T-cell (primary cell): ENCODE measurements at regions of chr13 and their contacts with region 1.

Region 1: DNA sequence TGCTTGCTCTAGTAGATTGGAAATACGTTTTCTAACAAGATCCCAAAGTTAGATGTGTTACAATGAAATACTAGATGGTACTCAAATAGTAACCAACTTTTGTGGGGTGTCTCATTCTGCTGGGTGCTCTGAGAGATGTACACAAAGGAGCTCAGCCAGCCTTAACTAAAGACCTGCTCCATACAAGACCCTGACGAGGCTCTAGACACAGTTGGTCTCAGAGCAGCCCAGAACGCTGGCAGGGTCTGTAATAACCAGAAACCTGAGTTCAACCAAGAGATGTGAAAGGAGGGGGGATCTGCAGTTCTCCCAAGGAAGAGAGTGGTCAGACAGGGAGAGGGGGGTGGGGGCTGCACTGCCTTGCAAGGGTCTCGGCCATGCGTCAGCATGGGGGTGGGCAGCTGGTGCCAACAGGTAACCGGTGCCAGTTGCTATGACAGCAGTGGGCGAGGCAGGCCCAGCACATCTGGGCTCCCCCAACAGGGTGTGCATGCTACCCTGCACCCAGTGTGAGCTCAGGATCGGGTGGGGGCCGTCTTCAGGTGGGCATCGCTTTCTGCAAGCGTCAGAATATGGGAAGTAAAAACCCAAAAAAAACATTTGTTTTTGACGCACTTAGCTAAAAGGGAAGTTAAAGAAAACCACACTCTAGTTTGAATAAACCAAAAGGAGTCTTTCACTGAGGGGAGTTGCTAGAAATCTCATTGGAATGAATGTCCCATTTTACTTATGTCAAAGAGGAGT is 68.0 kb upstream of the GPR183 start:
- DNase-seq: peak in 34 of 35 experiments; percentile 50 to 93 (median 84)
- ATAC-seq: peak; percentile 64 to 92 (median 70)
- H3K4me3 ChIP-seq: no peak overlapping the region
- H3K4me3 Mint-ChIP-seq: peak overlapping the region; percentile 49 to 72 (median 51)
- H3K27ac ChIP-seq: peak overlapping the region; percentile 88
- H3K27ac Mint-ChIP-seq: peak overlapping the region; percentile 98 to 100
- H3K4me1 ChIP-seq: peaks cover 68 to 69% of the 10 kb centered on the region in 2 experiments
- H3K4me1 Mint-ChIP-seq: peaks cover 87 to 94% (median 94%) of the 10 kb centered on the region in 3 donors
- H3K27me3 ChIP-seq: no peaks in the 10 kb centered on the region
- H3K27me3 Mint-ChIP-seq: no peaks in the 10 kb centered on the region

Region 2: DNA sequence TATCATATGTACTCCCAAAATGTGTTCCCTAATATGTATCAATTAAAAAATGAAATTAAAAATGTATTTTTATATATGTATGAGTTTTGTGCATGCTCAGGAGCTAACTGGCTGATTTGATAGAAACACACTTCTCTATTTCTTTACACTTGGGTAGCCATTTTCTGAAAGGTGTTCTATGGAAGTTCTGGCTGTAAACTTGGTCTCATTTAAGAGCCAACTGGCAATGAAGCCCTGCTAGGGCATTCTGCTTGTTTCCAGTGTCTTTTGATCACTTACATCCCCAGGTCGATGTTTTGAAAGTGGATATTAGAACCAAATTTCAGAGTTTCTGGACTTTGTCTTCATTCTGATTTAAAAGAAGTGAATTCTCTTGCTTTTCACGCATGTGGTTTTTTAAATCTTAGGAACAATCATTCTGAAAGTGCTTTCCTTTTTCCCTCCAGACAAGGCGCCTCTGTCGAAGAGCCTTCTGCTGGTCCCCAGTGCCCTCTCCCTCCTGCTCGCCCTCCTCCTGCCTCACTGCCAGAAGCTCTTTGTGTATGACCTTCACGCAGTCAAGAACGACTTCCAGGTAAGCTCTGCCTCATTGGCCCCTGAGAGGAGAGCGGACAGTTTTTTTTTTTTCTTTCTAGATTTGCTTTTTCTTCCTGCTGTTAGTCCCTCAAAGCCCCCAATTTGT is 137.0 kb before region 1 on chr13:
- CTCF ChIA-PET with region 1: no interaction called
- POLR2A ChIA-PET with region 1: interaction called in 1 of 2 experiments, 11 read pairs
- DNase-seq: peak in 7 of 35 experiments; percentile 13 to 66 (median 24)
- ATAC-seq: peak; percentile 75 to 90 (median 86)
- H3K4me3 ChIP-seq: peak overlapping the region; percentile 34 to 40
- H3K4me3 Mint-ChIP-seq: peak overlapping the region; percentile 80 to 83 (median 82)
- H3K27ac ChIP-seq: peak overlapping the region; percentile 76
- H3K27ac Mint-ChIP-seq: peak overlapping the region; percentile 98 to 100
- H3K4me1 ChIP-seq: peaks cover 25 to 26% of the 10 kb centered on the region in 2 experiments
- H3K4me1 Mint-ChIP-seq: peaks cover 61 to 69% (median 69%) of the 10 kb centered on the region in 3 donors
- H3K27me3 ChIP-seq: no peaks in the 10 kb centered on the region
- H3K27me3 Mint-ChIP-seq: no peaks in the 10 kb centered on the region

Region 3: GRCh38 chr13:99301913-99302636 is 73.1 kb before region 1 on chr13:
- CTCF ChIA-PET with region 1: interaction called in 1 of 2 experiments, 3 read pairs
- POLR2A ChIA-PET with region 1: interaction called, 9 to 17 read pairs
- DNase-seq: no peak
- ATAC-seq: no peak
- H3K4me3 ChIP-seq: peak overlapping the region; percentile 3 to 68
- H3K4me3 Mint-ChIP-seq: peak overlapping the region; percentile 94 to 99 (median 96)
- H3K27ac ChIP-seq: peak overlapping the region; percentile 80
- H3K27ac Mint-ChIP-seq: peak overlapping the region; percentile 96 to 98
- H3K4me1 ChIP-seq: peaks cover 35 to 58% of the 10 kb centered on the region in 2 experiments
- H3K4me1 Mint-ChIP-seq: peaks cover 71 to 88% (median 81%) of the 10 kb centered on the region in 3 donors
- H3K27me3 ChIP-seq: no peaks in the 10 kb centered on the region
- H3K27me3 Mint-ChIP-seq: no peaks in the 10 kb centered on the region

Region 4: DNA sequence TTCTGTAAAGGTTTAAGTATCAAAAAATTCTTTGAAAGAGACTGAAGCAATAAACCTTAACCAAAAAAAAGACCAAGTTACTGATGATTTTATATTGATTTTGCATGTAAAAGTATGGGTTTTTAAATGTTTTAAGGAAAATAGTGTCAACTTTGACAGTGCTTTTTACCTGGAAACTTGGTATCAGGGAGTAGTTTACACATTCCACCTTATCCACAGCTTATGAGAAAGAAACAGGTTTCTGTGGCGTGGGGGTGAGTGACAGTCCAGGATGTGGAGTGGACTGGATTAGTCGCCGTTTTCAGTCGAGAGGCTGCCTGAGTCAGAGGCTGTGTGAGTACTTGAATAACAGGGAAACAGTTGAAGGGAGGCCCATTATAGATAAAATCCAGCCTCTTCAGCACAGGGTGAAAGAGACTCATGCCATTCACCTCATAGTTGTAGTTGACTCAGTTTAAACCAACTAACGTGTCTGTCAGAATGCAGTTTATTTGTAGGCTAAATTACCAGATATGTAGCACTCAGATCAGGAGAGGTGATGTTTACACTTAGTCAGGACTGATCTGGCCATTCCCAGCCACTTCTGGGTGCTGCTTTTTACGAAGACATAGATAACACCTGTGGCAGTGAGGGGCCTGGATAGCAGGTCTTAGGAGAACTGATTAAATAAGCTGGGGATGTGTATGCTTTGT is 67.4 kb before region 1 on chr13:
- CTCF ChIA-PET with region 1: interaction called in 1 of 2 experiments, 3 read pairs
- POLR2A ChIA-PET with region 1: interaction called, 9 to 17 read pairs
- DNase-seq: peak in 5 of 35 experiments; percentile 14 to 54 (median 45)
- ATAC-seq: peak; percentile 22 to 40 (median 29)
- H3K4me3 ChIP-seq: peak overlapping the region in 1 of 2 donors; percentile 9
- H3K4me3 Mint-ChIP-seq: peak overlapping the region; percentile 94 to 99 (median 96)
- H3K27ac ChIP-seq: peak overlapping the region; percentile 80
- H3K27ac Mint-ChIP-seq: peak overlapping the region; percentile 96
- H3K4me1 ChIP-seq: peaks cover 46 to 53% of the 10 kb centered on the region in 2 experiments
- H3K4me1 Mint-ChIP-seq: peaks cover 78 to 95% (median 83%) of the 10 kb centered on the region in 3 donors
- H3K27me3 ChIP-seq: no peaks in the 10 kb centered on the region
- H3K27me3 Mint-ChIP-seq: no peaks in the 10 kb centered on the region

Region 5: DNA sequence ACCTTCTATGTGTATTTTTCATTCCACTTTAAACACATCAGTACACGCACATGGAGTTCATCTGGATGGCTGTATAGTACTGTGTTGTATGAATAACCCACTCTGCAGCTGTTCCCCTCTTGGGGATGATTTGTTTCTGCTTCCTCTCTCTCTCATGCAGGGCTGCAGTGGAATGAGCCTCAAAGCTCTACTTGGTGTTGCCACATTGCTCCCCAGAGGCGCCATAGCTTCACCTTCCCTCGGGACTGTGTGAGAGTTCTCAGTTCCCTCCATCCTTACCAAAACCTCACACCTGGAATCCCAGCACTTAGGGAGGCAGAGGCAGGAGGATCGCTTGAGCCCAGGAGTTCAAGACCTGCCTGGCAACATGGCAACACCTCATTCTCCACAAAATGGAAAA is 39.6 kb before region 1 on chr13:
- CTCF ChIA-PET with region 1: no interaction called
- POLR2A ChIA-PET with region 1: interaction called, 3 to 17 read pairs
- DNase-seq: no peak
- ATAC-seq: no peak
- H3K4me3 ChIP-seq: no peak overlapping the region
- H3K4me3 Mint-ChIP-seq: no peak overlapping the region
- H3K27ac ChIP-seq: no peak overlapping the region
- H3K27ac Mint-ChIP-seq: peak overlapping the region; percentile 74 to 87
- H3K4me1 ChIP-seq: peaks cover 23 to 24% of the 10 kb centered on the region in 2 experiments
- H3K4me1 Mint-ChIP-seq: peaks cover 71 to 81% (median 78%) of the 10 kb centered on the region in 3 donors
- H3K27me3 ChIP-seq: no peaks in the 10 kb centered on the region
- H3K27me3 Mint-ChIP-seq: no peaks in the 10 kb centered on the region

Region 6: GRCh38 chr13:99399636-99399974 is 24.4 kb after region 1 on chr13:
- CTCF ChIA-PET with region 1: no interaction called
- POLR2A ChIA-PET with region 1: no interaction called
- DNase-seq: no peak
- ATAC-seq: no peak
- H3K4me3 ChIP-seq: no peak overlapping the region
- H3K4me3 Mint-ChIP-seq: peak overlapping the region; percentile 24 to 64 (median 54)
- H3K27ac ChIP-seq: no peak overlapping the region
- H3K27ac Mint-ChIP-seq: peak overlapping the region; percentile 16 to 80
- H3K4me1 ChIP-seq: peaks cover 3 to 26% of the 10 kb centered on the region in 2 experiments
- H3K4me1 Mint-ChIP-seq: peaks cover 44 to 58% (median 49%) of the 10 kb centered on the region in 3 donors
- H3K27me3 ChIP-seq: peaks cover 0 to 3% of the 10 kb centered on the region in 2 experiments
- H3K27me3 Mint-ChIP-seq: no peaks in the 10 kb centered on the region

Region 7: GRCh38 chr13:99417201-99418102 is 42.3 kb after region 1 on chr13:
- CTCF ChIA-PET with region 1: interaction called in 1 of 2 experiments, 3 read pairs
- POLR2A ChIA-PET with region 1: interaction called in 1 of 2 experiments, 12 read pairs
- DNase-seq: peak in 24 of 35 experiments; percentile 13 to 69 (median 50)
- ATAC-seq: peak; percentile 10 to 45 (median 11)
- H3K4me3 ChIP-seq: peak overlapping the region; percentile 47 to 84
- H3K4me3 Mint-ChIP-seq: no peak overlapping the region
- H3K27ac ChIP-seq: peak overlapping the region; percentile 71
- H3K27ac Mint-ChIP-seq: no peak overlapping the region
- H3K4me1 ChIP-seq: peaks cover 74 to 89% of the 10 kb centered on the region in 2 experiments
- H3K4me1 Mint-ChIP-seq: peaks cover 54 to 65% (median 57%) of the 10 kb centered on the region in 3 donors
- H3K27me3 ChIP-seq: peaks cover 0 to 14% of the 10 kb centered on the region in 2 experiments
- H3K27me3 Mint-ChIP-seq: no peaks in the 10 kb centered on the region